ENCODE measurements at regions of chr6 and their contacts with region 1.

Region 1: DNA sequence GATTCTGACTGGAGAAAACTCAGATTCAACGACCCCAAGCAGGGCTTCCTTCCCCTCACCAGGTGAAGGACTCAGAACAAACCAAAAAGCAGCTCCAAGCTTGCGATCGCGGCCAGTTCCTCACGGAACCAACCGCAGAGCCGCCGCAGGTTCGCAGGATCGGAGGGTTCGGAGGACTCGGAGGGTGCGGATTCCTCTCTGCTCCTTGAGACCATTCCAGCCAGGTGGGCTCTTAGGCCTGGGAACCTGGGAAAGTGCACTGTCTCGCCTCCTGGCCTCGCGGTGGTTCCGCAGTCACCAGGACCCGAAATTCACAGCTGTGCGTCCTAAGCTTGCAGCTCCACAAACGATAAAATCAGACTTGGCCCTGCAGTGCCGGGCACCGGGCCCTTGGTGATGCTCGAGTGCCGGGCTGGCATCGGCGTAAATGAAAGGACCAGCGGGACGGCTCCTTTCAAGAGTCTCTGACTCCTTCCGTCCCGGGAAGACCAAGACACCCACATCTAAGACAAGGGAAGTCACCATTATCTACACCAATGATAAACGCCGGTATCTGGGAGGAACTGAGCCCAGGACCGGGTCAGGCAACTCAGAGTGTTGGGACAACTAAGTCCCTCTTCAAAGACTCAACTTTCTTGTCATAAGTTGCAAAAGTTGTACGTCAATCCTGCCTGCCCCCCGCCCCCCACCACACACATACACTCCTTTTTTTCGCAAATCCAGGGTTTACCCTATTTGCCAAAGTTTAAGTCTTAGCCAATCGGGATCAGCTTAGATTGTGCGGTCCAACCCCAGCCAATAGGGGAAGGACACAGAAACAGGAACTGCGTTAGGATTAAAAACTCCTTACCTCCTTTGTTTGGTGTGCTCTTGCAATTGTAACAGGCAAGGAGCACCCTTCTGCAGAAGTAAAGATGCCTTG is 69.8 kb upstream of the PRSS16 start:
- DNase-seq: no peak
- H3K4me3 ChIP-seq: peak overlapping the region; percentile 70 to 92 (median 78)
- H3K27ac ChIP-seq: peak overlapping the region; percentile 66 to 85 (median 83)
- H3K4me1 ChIP-seq: peaks cover 6 to 16% (median 14%) of the 10 kb centered on the region in 4 donors
- H3K27me3 ChIP-seq: peaks cover 0 to 7% (median 0%) of the 10 kb centered on the region in 4 donors
- CTCF ChIP-seq: peak in 2 of 3 experiments; percentile 38 to 66
- EP300 ChIP-seq: no peak
- POLR2A ChIP-seq: no peak

Region 2: GRCh38 chr6:27059621-27060425 is 117.9 kb before region 1 on chr6:
- intact Hi-C with region 1: no loop called
- DNase-seq: no peak
- H3K4me3 ChIP-seq: no peak overlapping the region
- H3K27ac ChIP-seq: no peak overlapping the region
- H3K4me1 ChIP-seq: no peaks in the 10 kb centered on the region
- H3K27me3 ChIP-seq: peaks cover 0 to 4% (median 0%) of the 10 kb centered on the region in 4 donors
- CTCF ChIP-seq: no peak
- EP300 ChIP-seq: no peak
- POLR2A ChIP-seq: no peak

Region 3: DNA sequence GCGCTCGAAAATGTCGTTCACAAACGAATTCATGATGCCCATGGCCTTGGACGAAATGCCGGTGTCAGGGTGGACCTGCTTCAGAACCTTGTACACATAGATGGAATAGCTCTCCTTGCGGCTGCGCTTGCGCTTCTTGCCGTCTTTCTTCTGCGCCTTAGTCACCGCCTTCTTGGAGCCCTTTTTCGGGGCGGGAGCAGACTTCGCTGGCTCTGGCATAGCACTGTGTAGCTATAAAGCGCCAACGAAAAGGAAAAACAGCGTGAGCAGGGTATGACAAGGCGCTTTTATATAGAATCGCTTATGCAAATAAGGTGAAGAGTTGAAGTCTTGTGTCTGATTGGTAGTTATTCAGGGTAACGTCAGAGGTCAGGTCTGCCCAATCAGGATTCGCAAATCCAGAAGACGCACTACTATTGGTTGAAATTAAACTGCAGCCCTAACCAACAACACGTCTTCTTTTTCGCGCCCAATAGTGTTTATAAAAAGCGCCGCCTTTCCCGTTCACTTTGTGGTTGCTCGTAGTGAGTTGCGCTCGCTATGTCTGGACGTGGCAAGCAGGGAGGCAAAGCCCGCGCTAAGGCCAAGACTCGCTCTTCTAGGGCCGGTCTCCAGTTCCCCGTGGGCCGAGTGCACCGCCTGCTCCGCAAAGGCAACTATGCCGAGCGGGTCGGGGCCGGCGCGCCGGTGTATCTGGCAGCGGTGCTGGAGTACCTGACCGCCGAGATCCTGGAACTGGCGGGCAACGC is 45.0 kb before region 1 on chr6:
- intact Hi-C with region 1: loop called (anchors 5 kb)
- DNase-seq: peak; percentile 99
- H3K4me3 ChIP-seq: peak overlapping the region; percentile 59 to 64 (median 62)
- H3K27ac ChIP-seq: peak overlapping the region; percentile 88 to 96 (median 92)
- H3K4me1 ChIP-seq: peaks cover 14 to 28% (median 23%) of the 10 kb centered on the region in 4 donors
- H3K27me3 ChIP-seq: no peaks in the 10 kb centered on the region
- CTCF ChIP-seq: no peak
- EP300 ChIP-seq: no peak
- POLR2A ChIP-seq: peak; percentile 68

Region 4: GRCh38 chr6:27472617-27473400 is 295.1 kb after region 1 on chr6 and contains the start of gene ZNF184:
- intact Hi-C with region 1: loop called (anchors 5 kb)
- DNase-seq: peak; percentile 98
- H3K4me3 ChIP-seq: peak within 1 kb of the TSS; percentile 72 to 96 (median 84)
- H3K27ac ChIP-seq: peak within 1 kb of the TSS; percentile 88 to 94 (median 90)
- H3K4me1 ChIP-seq: peaks cover 13 to 41% (median 30%) of the 10 kb centered on the region in 4 donors
- H3K27me3 ChIP-seq: no peaks in the 10 kb centered on the region
- CTCF ChIP-seq: peak in 2 of 3 experiments; percentile 9 to 15
- EP300 ChIP-seq: no peak
- POLR2A ChIP-seq: peak; percentile 48
- total RNA-seq, gene ZNF184: 3.0 to 6.7 (median 5.9) TPM

Measured in esophagus muscularis mucosa (tissue), 4 donors.